PC-9 (cell line): ENCODE measurements at regions of chr4 and their contacts with region 1.

Region 1: GRCh38 chr4:87073199-87074120 is 138.6 kb downstream of the AFF1 start:
- DNase-seq: no peak
- H3K4me3 ChIP-seq: no peak overlapping the region
- H3K27ac ChIP-seq: no peak overlapping the region
- H3K4me1 ChIP-seq: no peaks in the 10 kb centered on the region
- H3K27me3 ChIP-seq: no peaks in the 10 kb centered on the region
- CTCF ChIP-seq: no peak

Region 2: GRCh38 chr4:86386817-86387415 is 686.5 kb before region 1 on chr4:
- CTCF ChIA-PET with region 1: no interaction called
- POLR2A ChIA-PET with region 1: interaction called, 11 read pairs
- intact Hi-C with region 1: no loop called
- DNase-seq: no peak
- H3K4me3 ChIP-seq: no peak overlapping the region
- H3K27ac ChIP-seq: no peak overlapping the region
- H3K4me1 ChIP-seq: no peaks in the 10 kb centered on the region
- H3K27me3 ChIP-seq: no peaks in the 10 kb centered on the region
- CTCF ChIP-seq: no peak